Dendritic cell treated with granulocyte-macrophage colony-stimulating factor and Interleukin-4, amounts not matched to agents 40 ng/mL and 50 ng/mL, for 4 days (primary cell): ENCODE measurements at regions of chr1 and their contacts with region 1.

Region 1: GRCh38 chr1:156456622-156457465 is 43.7 kb downstream of the MEF2D start:
- H3K4me3 Mint-ChIP-seq: peak overlapping the region; percentile 92
- H3K27ac Mint-ChIP-seq: peak overlapping the region; percentile 100
- H3K4me1 Mint-ChIP-seq: peaks cover 45% of the 10 kb centered on the region
- H3K27me3 Mint-ChIP-seq: no peaks in the 10 kb centered on the region

Region 2: DNA sequence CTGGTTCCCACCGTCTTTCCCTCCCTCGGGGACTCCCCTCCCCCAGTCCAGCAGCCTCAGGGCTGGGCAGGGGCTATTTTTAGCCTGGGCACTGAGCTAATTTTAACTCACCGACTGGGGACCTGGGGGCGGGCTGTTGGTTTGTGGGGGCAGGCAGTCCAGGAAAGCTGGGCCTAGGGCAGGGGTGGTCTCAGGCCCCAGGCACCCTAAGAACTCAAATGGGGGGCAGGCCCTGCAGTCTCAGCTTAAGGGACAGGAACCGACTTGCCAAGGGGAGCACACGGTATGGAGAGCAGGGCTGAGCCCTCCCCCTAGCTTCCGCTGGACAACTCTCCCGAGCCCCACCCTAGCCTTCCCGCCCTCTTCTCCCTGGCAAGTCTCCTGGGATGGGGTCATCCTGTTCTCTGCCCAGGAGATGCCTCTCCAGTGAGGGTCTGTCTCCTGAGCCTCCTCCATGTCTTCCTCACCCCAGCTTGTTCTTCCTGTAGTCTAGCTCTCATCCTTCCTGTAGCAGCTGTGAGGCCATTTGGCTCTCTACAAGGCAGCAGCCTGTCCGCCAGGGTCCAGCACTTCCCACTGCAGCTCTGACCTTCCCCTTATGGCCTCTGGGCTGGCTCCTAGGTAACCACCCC is 33.7 kb after region 1 on chr1:
- intact Hi-C with region 1: loop called (anchors 5 kb)
- H3K4me3 Mint-ChIP-seq: peak overlapping the region; percentile 51
- H3K27ac Mint-ChIP-seq: peak overlapping the region; percentile 73
- H3K4me1 Mint-ChIP-seq: peaks cover 98% of the 10 kb centered on the region
- H3K27me3 Mint-ChIP-seq: no peaks in the 10 kb centered on the region

Region 3: DNA sequence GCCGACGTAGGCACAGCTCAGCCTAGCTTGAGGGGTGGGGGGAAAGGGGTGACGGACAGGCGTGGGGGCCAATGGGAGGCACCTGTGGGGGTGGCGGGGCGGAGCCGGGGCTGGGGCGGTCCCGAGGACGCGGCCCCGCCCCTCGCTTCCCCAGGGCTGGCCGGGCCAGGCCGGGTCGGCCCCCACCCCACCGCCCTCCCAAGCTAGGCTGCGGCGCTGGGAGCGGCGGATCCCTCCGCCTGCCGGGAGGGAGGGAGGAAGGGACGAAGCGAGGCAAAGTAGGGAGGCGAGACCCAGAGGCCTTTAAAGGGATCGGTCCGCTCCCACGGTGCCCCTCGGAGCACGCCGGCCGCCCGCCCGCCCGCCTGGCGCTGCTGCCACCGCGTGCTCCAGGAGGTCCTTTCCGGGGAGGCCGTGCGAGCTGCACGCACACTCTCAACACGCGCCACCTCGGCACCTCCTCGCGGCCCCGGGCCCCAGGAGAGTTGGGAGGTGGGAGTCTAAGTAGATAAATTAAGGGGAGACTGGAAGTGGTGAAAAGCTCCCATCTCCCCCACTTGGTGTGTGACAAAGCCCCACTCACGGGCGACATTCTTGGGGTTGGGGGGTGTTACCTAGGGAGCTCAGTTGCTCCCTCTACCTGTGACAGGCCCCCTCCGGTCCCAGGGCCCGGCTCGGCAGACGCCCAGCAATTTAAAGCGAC is 44.1 kb after region 1 on chr1:
- intact Hi-C with region 1: loop called (anchors 2 kb)
- H3K4me3 Mint-ChIP-seq: peak overlapping the region; percentile 89
- H3K27ac Mint-ChIP-seq: peak overlapping the region; percentile 100
- H3K4me1 Mint-ChIP-seq: peaks cover 77% of the 10 kb centered on the region
- H3K27me3 Mint-ChIP-seq: no peaks in the 10 kb centered on the region

Region 4: DNA sequence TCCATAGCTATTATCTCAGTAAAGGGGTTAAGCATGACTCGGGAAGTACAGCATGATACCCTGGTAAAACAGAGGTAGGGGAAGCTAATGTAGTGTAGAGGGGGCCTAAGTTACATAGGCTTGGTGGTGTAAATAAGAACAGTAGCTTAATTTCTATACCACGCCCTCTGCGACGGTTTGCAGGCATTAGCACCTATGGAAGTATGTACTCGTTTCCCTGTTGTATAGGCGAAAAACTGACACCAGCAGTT is 134.3 kb after region 1 on chr1:
- intact Hi-C with region 1: no loop called
- H3K4me3 Mint-ChIP-seq: peak overlapping the region; percentile 80
- H3K27ac Mint-ChIP-seq: peak overlapping the region; percentile 75
- H3K4me1 Mint-ChIP-seq: peaks cover 9% of the 10 kb centered on the region
- H3K27me3 Mint-ChIP-seq: no peaks in the 10 kb centered on the region

Region 5: DNA sequence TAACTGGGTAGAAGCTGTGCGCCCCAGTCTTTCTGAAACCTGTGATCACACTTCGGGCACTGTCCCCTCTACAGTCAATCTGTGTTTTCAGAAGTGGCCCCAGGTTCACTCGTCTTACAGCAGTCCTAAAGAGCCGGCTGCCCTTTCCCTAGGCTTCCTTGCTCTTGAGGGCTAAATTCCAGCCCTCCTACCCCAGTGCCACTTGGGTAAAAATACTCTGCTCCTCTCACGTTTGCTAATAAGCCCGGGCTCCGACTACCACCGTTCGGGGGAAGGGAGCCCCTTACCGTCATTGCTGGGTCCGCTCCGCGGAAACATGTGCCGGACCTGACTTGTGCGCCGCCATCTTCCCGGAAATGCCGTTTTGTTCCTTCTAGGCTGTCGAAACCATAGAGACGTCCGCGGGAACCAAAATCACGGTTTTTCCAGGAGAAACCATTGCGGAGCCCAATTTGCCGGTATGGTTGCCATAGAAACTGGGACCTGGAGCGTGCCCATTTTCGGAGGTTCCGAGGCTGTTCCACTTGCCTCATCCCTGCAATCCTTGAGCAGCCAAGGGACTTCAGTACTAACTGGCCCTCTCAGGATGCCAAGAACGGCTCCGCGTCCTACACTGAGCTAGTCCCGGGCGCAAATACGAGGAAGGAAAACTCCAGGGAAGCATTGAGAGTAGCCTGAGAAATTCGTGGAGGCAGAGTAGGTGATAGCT is 144.4 kb after region 1 on chr1 and contains the start of gene GPATCH4:
- intact Hi-C with region 1: loop called (anchors 2 kb)
- H3K4me3 Mint-ChIP-seq: peak within 1 kb of the TSS; percentile 98
- H3K27ac Mint-ChIP-seq: peak within 1 kb of the TSS; percentile 87
- H3K4me1 Mint-ChIP-seq: peaks cover 28% of the 10 kb centered on the region
- H3K27me3 Mint-ChIP-seq: no peaks in the 10 kb centered on the region

Region 6: DNA sequence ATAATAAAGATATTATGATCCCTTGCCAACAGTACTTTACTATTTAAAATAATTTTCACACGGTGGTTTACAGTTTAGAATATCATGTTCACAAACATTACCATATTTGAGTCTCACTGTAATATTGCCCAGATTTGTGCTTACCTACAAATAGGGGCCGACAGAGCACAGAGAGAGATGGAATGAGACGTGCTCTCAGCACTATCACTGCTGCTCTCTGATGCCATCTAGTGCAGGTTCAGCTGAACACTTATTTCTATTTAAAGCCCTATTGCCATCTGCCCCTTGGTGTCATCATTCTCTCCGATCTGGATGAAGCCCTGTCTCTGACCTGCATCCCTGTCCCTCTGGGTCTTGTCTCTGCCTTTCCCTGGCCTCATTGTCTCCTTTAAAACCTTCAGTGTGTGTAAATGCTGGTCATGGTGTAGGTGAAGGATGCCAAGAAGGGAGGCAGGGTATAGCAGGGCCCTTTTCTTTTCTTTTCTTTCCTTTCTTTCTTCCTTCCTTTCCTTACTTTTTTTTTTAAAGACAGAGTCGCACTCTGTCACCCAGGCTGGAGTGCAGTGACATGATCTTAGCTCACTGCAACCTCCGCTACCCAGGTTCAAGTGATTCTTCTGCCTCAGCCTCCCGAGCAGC is 151.3 kb after region 1 on chr1:
- intact Hi-C with region 1: loop called (anchors 1 kb)
- H3K4me3 Mint-ChIP-seq: no peak overlapping the region
- H3K27ac Mint-ChIP-seq: no peak overlapping the region
- H3K4me1 Mint-ChIP-seq: peaks cover 18% of the 10 kb centered on the region
- H3K27me3 Mint-ChIP-seq: peaks cover 30% of the 10 kb centered on the region

Region 7: GRCh38 chr1:156794506-156795373 is 337.9 kb after region 1 on chr1:
- intact Hi-C with region 1: no loop called
- H3K4me3 Mint-ChIP-seq: no peak overlapping the region
- H3K27ac Mint-ChIP-seq: no peak overlapping the region
- H3K4me1 Mint-ChIP-seq: peaks cover 13% of the 10 kb centered on the region
- H3K27me3 Mint-ChIP-seq: no peaks in the 10 kb centered on the region